Endothelial cell of umbilical vein (primary cell): ENCODE measurements at regions of chr1 and their contacts with region 1.

Region 1: GRCh38 chr1:47738560-47739182 is 258.5 kb downstream of the TRABD2B start:
- DNase-seq: peak; percentile 42
- H3K4me3 ChIP-seq: no peak overlapping the region
- H3K27ac ChIP-seq: no peak overlapping the region
- H3K4me1 ChIP-seq: no peaks in the 10 kb centered on the region
- H3K27me3 ChIP-seq: peaks cover 8 to 13% of the 10 kb centered on the region in 2 experiments
- CTCF ChIP-seq: peak; percentile 61 to 84
- POLR2A ChIP-seq: no peak

Region 2: GRCh38 chr1:47803815-47804498 is 65.3 kb after region 1 on chr1:
- CTCF ChIA-PET with region 1: no interaction called
- POLR2A ChIA-PET with region 1: no interaction called
- dilution Hi-C with region 1: no loop called
- intact Hi-C with region 1: no loop called
- DNase-seq: no peak
- H3K4me3 ChIP-seq: no peak overlapping the region
- H3K27ac ChIP-seq: no peak overlapping the region
- H3K4me1 ChIP-seq: no peaks in the 10 kb centered on the region
- H3K27me3 ChIP-seq: no peaks in the 10 kb centered on the region
- CTCF ChIP-seq: no peak
- POLR2A ChIP-seq: no peak

Region 3: DNA sequence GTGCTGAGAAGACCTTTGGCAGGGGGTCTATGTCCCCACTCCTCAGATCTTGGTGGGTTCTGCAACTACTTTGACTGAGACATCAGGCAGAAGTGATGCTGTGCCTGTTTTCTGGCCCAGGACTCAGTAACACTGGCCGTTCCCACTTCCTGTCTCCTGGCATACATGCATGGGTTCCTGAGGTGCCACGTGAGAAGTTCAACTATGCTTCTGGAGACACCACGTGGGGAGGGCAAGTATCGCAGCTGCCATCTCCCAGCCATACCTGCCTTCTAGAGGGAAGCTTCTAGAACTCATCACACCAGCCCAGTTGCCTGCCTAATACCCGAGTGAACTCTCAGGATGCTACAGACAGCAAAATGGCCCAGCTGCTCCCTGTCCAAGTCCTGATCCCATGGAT is 192.7 kb after region 1 on chr1:
- CTCF ChIA-PET with region 1: interaction called, 27 read pairs
- POLR2A ChIA-PET with region 1: no interaction called
- dilution Hi-C with region 1: no loop called
- intact Hi-C with region 1: loop called (anchors 1 kb)
- DNase-seq: peak; percentile 39
- H3K4me3 ChIP-seq: no peak overlapping the region
- H3K27ac ChIP-seq: no peak overlapping the region
- H3K4me1 ChIP-seq: no peaks in the 10 kb centered on the region
- H3K27me3 ChIP-seq: peaks cover 2 to 13% of the 10 kb centered on the region in 2 experiments
- CTCF ChIP-seq: peak; percentile 45 to 55
- POLR2A ChIP-seq: no peak

Region 4: GRCh38 chr1:48061162-48062136 is 322.8 kb after region 1 on chr1:
- CTCF ChIA-PET with region 1: interaction called, 31 read pairs
- POLR2A ChIA-PET with region 1: no interaction called
- dilution Hi-C with region 1: no loop called
- intact Hi-C with region 1: loop called (anchors 1 kb)
- DNase-seq: peak; percentile 61
- H3K4me3 ChIP-seq: no peak overlapping the region
- H3K27ac ChIP-seq: no peak overlapping the region
- H3K4me1 ChIP-seq: no peaks in the 10 kb centered on the region
- H3K27me3 ChIP-seq: no peaks in the 10 kb centered on the region
- CTCF ChIP-seq: peak; percentile 48 to 56
- POLR2A ChIP-seq: no peak